Spleen (tissue), 13 donors: ENCODE measurements at regions of chr5 and their contacts with region 1.

Region 1: DNA sequence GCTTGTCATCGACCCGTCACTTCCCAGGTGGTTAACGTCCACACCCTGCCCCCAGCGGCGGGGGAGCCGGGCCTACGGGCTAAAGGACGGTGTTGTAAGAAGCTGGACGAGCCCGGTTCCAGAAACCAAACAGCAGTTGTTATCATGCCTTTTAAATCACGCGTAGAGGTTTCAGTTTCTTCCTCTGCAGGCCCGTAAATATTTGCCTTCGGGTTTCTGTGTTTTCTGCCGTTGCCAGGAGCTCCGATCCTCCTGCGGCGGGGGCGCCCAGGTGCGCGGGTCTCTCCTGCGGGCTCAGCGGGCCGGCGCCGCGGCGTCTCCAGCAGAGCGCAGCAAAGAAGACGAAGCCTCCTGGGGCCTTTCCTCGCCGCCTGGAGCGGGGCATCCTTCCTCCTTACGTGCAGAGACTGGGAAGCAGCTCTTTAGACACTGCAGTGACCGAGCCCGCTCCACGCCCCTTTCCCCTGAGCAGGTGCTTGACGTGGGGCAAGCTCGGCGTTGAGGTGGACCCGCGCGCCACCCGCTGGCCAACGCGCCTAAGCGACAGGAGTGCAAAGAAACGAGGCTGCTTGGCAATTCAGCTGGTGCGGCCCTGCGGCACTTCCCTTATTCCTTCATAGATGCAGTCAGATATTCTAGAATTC is 21.8 kb upstream of the TTC1 start:
- DNase-seq: peak; percentile 95
- H3K4me3 ChIP-seq: peak overlapping the region; percentile 22 to 72 (median 44)
- H3K27ac ChIP-seq: peak overlapping the region in 1 of 8 donors; percentile 24
- H3K4me1 ChIP-seq: peaks cover 0 to 13% (median 10%) of the 10 kb centered on the region in 6 donors
- H3K27me3 ChIP-seq: peaks cover 0 to 39% (median 3%) of the 10 kb centered on the region in 7 donors
- CTCF ChIP-seq: peak; percentile 35 to 79 (median 68)
- POLR2A ChIP-seq: no peak

Region 2: GRCh38 chr5:159286420-159287035 is 700.6 kb before region 1 on chr5:
- intact Hi-C with region 1: loop called (anchors 10 kb)
- DNase-seq: no peak
- H3K4me3 ChIP-seq: no peak overlapping the region
- H3K27ac ChIP-seq: no peak overlapping the region
- H3K4me1 ChIP-seq: no peaks in the 10 kb centered on the region
- H3K27me3 ChIP-seq: no peaks in the 10 kb centered on the region
- CTCF ChIP-seq: peak in 8 of 11 experiments; percentile 10 to 49 (median 39)
- POLR2A ChIP-seq: no peak